ENCODE measurements at regions of chr20 and their contacts with region 1.

Region 1: DNA sequence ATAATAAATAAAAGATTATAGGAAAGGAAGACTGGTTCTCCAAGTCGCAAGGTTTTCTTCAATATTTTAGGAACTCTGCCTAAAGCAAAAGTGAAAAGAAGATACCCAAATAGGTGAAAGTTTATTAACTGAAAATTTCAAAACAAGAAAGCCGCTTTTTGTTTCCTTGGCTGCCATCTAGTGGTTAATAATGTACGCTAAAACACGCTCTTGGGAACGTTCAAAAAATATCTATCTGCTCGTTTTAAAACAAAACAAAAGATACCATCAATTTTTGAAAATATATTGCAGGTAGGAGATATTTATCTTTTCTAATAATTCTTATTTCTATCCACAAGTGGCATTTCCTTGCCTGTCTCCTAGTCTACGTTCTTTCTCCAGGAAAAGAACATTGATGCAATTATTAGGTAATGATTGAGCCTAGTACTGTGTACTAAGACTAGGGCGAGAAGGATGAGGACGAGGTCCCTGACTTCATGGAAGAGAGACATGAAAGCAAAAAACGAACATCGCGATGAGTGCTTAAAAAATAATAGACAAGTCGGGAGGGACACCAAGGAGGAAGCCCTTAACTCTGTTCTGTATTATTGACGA is 97.2 kb downstream of the SPTLC3 start:
- DNase-seq: peak in 2 of 4 donors; percentile 19 to 31
- ATAC-seq: peak; percentile 41
- H3K4me3 ChIP-seq: no peak overlapping the region
- H3K27ac ChIP-seq: no peak overlapping the region
- H3K4me1 ChIP-seq: no peaks in the 10 kb centered on the region
- H3K27me3 ChIP-seq: no peaks in the 10 kb centered on the region
- CTCF ChIP-seq: peak; percentile 56 to 75

Region 2: DNA sequence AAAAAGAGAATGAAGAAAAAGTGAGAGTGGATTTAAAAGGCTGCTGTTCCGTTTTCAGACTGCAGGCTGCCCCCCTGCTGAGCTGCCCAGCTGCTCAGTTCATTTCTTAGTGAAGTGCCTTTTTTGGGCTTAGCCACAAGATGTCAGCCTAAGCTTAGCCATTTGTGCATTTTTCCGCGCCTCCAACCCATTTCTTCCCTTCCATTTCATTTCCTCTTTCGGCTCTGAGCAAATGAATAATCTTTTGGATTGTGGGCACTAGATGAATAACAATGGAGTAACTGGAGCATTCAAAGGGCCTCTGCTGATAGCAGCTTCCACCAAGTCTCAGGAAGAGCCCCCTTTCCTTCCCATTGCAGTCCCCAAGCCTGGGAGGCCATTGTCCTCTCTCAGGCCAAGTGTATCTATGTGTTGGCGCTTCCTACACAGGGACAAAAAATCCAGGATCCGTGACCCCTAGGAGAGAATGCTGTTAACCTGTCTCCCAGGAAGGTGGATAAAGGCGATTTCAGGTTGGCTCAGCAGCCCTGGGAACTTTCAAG is 180.7 kb before region 1 on chr20:
- intact Hi-C with region 1: loop called in 1 of 2 experiments (anchors 5 kb)
- DNase-seq: peak in 2 of 4 donors; percentile 59 to 82
- ATAC-seq: peak; percentile 96
- H3K4me3 ChIP-seq: no peak overlapping the region
- H3K27ac ChIP-seq: no peak overlapping the region
- H3K4me1 ChIP-seq: no peaks in the 10 kb centered on the region
- H3K27me3 ChIP-seq: no peaks in the 10 kb centered on the region
- CTCF ChIP-seq: peak; percentile 53 to 85

Region 3: GRCh38 chr20:12970372-12970821 is 135.6 kb before region 1 on chr20:
- intact Hi-C with region 1: loop called in 1 of 2 experiments (anchors 5 kb)
- DNase-seq: peak in 2 of 4 donors; percentile 18 to 52
- ATAC-seq: peak; percentile 87
- H3K4me3 ChIP-seq: no peak overlapping the region
- H3K27ac ChIP-seq: no peak overlapping the region
- H3K4me1 ChIP-seq: no peaks in the 10 kb centered on the region
- H3K27me3 ChIP-seq: no peaks in the 10 kb centered on the region
- CTCF ChIP-seq: peak in 1 of 2 donors; percentile 59

Region 4: DNA sequence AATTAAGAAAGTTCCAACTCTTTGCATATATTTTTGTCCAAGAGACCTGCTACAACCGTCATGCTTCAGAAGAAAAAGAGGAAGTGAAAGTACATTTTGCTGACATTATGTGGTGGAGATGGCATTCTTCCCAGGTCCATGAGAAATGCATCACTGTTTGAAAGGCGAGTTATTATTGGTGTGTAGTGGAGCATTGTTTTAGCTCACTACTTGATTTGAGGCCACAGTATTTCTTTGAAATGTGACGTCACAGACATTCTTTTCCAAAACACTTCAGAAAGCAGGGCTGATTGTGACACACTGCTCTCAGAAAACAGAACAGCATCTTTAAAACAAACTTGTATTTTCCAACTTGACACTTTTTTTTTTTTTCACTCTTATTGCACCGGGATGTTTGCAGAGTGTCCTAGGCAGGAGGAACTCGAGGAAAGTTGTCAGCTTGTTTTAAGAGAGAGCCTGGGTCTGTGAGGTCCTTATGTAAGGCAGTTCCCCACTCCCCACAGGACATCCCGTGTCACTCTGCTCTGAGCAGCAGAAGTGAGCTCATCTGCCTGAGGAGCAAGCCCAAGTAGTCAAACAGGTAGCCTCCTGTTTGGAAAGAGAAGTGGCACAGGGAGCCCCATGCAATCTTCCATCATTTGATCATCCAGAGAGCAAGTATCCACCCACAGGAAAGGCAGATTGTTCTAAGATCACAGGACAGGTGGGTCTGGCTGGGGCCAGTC is 96.1 kb before region 1 on chr20:
- intact Hi-C with region 1: no loop called
- DNase-seq: peak in 2 of 4 donors; percentile 73 to 86
- ATAC-seq: peak; percentile 86
- H3K4me3 ChIP-seq: peak overlapping the region; percentile 30 to 45
- H3K27ac ChIP-seq: peak overlapping the region; percentile 72 to 82
- H3K4me1 ChIP-seq: peaks cover 5 to 22% of the 10 kb centered on the region in 2 donors
- H3K27me3 ChIP-seq: no peaks in the 10 kb centered on the region
- CTCF ChIP-seq: no peak

Region 5: GRCh38 chr20:13022401-13023155 is 83.4 kb before region 1 on chr20:
- intact Hi-C with region 1: no loop called
- DNase-seq: no peak
- ATAC-seq: no peak
- H3K4me3 ChIP-seq: no peak overlapping the region
- H3K27ac ChIP-seq: no peak overlapping the region
- H3K4me1 ChIP-seq: no peaks in the 10 kb centered on the region
- H3K27me3 ChIP-seq: no peaks in the 10 kb centered on the region
- CTCF ChIP-seq: no peak

Region 6: DNA sequence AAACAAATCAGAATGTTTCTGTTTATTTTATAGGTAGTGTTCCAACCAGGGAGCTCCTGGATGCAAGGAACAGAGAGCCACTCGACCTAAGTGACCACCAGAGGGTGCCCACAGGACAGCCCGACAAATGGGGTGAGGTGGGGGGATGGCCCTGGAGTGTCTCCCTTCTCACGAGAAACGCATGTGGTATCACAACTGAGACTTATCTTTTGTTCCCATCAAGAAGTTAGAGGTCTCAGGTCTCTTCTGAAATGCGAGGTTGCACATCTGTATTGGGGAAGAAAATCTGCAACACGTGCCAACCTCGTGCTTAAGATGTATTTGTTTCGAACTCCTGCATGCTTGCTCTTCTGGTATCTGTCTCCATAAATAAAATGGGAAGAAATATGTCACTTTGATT is 219.1 kb after region 1 on chr20:
- intact Hi-C with region 1: no loop called
- DNase-seq: no peak
- ATAC-seq: peak; percentile 66
- H3K4me3 ChIP-seq: no peak overlapping the region
- H3K27ac ChIP-seq: no peak overlapping the region
- H3K4me1 ChIP-seq: no peaks in the 10 kb centered on the region
- H3K27me3 ChIP-seq: no peaks in the 10 kb centered on the region
- CTCF ChIP-seq: peak; percentile 10 to 30

Measured in left lung (tissue), 14 donors.